ENCODE measurements at regions of chr11 and their contacts with region 1.

Region 1: GRCh38 chr11:69048718-69049489 is at the start of gene TPCN2:
- DNase-seq: peak; percentile 91
- H3K4me3 Mint-ChIP-seq: peak within 1 kb of the TSS; percentile 85
- H3K27ac Mint-ChIP-seq: peak within 1 kb of the TSS; percentile 72
- H3K4me1 Mint-ChIP-seq: peaks cover 14% of the 10 kb centered on the region
- H3K27me3 Mint-ChIP-seq: peaks cover 13% of the 10 kb centered on the region
- total RNA-seq, gene TPCN2: 17.4 and 19.2 TPM in 2 replicates

Region 2: GRCh38 chr11:68751004-68751856 is 297.7 kb before region 1 on chr11 and contains the start of gene TESMIN:
- intact Hi-C with region 1: loop called (anchors 1 kb)
- DNase-seq: peak; percentile 83
- H3K4me3 Mint-ChIP-seq: peak within 1 kb of the TSS; percentile 75
- H3K27ac Mint-ChIP-seq: no peak within 1 kb of the TSS
- H3K4me1 Mint-ChIP-seq: no peaks in the 10 kb centered on the region
- H3K27me3 Mint-ChIP-seq: no peaks in the 10 kb centered on the region
- total RNA-seq, gene TESMIN: 1.0 and 2.1 TPM in 2 replicates

Region 3: DNA sequence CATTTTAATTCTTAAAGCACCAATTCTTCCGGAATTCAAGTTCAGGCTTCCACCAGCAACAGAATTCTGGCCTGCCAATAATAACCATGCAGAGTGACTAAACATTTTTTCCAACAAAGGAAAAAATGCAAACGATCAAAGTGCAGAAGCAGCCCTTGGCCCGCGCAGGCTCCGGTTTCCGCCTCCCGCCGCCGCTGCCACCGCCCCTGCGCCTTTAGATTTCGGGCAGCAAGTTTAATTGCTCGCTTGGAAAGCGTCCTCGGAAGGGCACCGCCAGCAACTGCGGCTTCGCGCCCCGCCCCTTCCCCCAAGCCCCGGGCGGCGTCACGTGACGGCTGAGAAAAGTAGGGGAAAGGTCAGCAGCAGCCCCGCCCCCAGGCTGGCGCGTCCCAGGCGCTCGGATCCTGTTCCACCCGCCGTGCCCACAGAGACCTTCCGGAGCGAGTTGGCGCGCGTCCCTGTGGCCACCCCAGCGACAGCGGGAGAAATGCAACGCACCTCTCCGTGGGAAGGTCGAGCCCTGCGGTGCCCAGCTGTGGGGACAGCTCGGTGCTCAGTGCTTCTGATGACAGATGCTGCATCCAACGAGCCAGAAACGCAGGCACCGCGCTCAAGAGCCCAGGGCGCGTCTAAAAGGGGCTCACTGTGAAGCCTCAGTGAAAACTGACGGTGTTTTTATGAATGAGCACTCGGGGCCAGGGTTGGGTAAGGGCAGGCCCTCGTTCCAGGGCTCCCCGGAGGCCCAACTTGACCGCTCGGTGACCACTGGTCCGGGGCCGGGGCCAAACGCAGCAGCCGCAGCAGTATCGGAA is 209.6 kb before region 1 on chr11:
- intact Hi-C with region 1: loop called (anchors 1 kb)
- DNase-seq: peak; percentile 85
- H3K4me3 Mint-ChIP-seq: peak overlapping the region; percentile 70
- H3K27ac Mint-ChIP-seq: peak overlapping the region; percentile 73
- H3K4me1 Mint-ChIP-seq: peaks cover 50% of the 10 kb centered on the region
- H3K27me3 Mint-ChIP-seq: peaks cover 2% of the 10 kb centered on the region

Region 4: GRCh38 chr11:69027704-69028372 is 21.1 kb before region 1 on chr11:
- intact Hi-C with region 1: no loop called
- DNase-seq: no peak
- H3K4me3 Mint-ChIP-seq: no peak overlapping the region
- H3K27ac Mint-ChIP-seq: no peak overlapping the region
- H3K4me1 Mint-ChIP-seq: no peaks in the 10 kb centered on the region
- H3K27me3 Mint-ChIP-seq: peaks cover 2% of the 10 kb centered on the region

Region 5: DNA sequence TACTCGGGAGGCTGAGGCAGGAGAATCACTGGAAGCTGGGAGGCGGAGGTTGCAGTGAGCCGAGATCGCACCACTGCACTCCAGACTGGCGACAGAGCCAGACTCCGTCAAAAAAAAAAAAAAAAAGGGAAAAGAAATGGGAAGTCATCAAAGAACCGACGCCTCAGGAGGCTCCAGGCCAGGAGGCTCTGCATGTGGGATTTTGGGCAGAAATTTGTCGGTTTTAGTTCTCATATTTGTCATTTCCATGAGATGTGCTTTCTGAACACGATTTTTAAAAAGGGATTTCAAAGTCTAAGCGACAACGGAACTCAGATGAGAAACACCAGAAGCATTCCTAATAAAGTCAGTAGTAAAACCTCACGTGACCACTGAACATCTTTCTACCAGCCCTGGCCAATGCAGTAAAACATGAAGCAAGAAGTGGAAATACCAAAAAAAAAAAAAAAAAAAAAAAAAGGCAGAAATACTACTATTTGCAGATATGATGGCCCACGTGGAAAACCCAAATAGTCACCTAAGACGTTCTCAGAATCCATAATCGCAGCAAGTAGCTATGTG is 627.0 kb after region 1 on chr11:
- intact Hi-C with region 1: loop called (anchors 1 kb)
- DNase-seq: no peak
- H3K4me3 Mint-ChIP-seq: peak overlapping the region; percentile 97
- H3K27ac Mint-ChIP-seq: no peak overlapping the region
- H3K4me1 Mint-ChIP-seq: peaks cover 20% of the 10 kb centered on the region
- H3K27me3 Mint-ChIP-seq: peaks cover 7% of the 10 kb centered on the region

Measured in activated T-helper 1 cell treated with anti-CD3 and anti-CD28 coated beads, Interleukin-12 subunit alpha, Interleukin-12 subunit beta, Interleukin-2, Interleukin-4 antibody, amounts not matched to agents 30 ng/mL and 10 ng/mL and 1 ng/mL, durations not matched to agents 14 hours and 24 hours and 36 hours (primary cell).